Mammary epithelial cell (primary cell): ENCODE measurements at regions of chr6 and their contacts with region 1.

Region 1: GRCh38 chr6:149834513-149835481 is 29.4 kb downstream of the LRP11 start:
- DNase-seq: peak; percentile 84
- H3K4me3 ChIP-seq: no peak overlapping the region
- H3K27ac ChIP-seq: peak overlapping the region; percentile 49
- H3K4me1 ChIP-seq: peaks cover 21% of the 10 kb centered on the region
- H3K27me3 ChIP-seq: no peaks in the 10 kb centered on the region
- CTCF ChIP-seq: peak; percentile 86 to 87

Region 2: DNA sequence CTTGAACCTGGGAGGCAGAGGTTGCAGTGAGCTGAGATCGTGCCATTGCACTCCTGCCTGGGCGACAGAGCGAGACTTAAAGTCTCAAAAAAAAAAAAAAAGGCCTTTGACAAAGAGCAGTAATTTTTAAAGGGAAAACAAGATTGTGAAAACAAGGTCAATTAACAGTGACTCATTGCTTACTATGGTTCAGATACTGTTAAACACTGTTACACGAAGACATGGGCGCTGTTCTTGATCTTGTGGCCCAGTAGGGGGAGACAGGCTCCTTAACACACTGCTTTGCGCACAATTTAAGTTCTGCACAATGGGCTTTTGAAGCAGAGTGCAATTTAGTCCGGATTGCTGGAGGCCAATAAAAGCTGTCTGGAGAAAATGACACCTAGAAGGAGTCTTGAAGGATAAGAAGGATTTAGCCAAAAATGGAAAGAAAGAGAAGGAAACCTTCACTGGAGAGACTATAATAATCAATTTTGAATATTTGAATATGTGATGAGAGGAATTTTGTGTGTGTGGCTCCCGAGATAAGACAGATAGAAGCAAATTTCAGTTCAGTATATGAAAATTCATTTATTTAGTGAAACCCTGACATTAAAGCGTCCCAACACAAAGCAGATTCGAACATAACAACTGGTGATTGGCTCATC is 110.9 kb before region 1 on chr6:
- CTCF ChIA-PET with region 1: no interaction called
- dilution Hi-C with region 1: no loop called
- in situ Hi-C with region 1: no loop called
- intact Hi-C with region 1: loop called (anchors 10 kb)
- DNase-seq: peak; percentile 74
- H3K4me3 ChIP-seq: no peak overlapping the region
- H3K27ac ChIP-seq: no peak overlapping the region
- H3K4me1 ChIP-seq: no peaks in the 10 kb centered on the region
- H3K27me3 ChIP-seq: no peaks in the 10 kb centered on the region
- CTCF ChIP-seq: peak; percentile 89 to 92

Region 3: GRCh38 chr6:149806127-149806526 is 28.7 kb before region 1 on chr6:
- CTCF ChIA-PET with region 1: no interaction called
- dilution Hi-C with region 1: no loop called
- in situ Hi-C with region 1: no loop called
- intact Hi-C with region 1: no loop called
- DNase-seq: peak; percentile 10
- H3K4me3 ChIP-seq: no peak overlapping the region
- H3K27ac ChIP-seq: no peak overlapping the region
- H3K4me1 ChIP-seq: no peaks in the 10 kb centered on the region
- H3K27me3 ChIP-seq: no peaks in the 10 kb centered on the region
- CTCF ChIP-seq: no peak

Region 4: DNA sequence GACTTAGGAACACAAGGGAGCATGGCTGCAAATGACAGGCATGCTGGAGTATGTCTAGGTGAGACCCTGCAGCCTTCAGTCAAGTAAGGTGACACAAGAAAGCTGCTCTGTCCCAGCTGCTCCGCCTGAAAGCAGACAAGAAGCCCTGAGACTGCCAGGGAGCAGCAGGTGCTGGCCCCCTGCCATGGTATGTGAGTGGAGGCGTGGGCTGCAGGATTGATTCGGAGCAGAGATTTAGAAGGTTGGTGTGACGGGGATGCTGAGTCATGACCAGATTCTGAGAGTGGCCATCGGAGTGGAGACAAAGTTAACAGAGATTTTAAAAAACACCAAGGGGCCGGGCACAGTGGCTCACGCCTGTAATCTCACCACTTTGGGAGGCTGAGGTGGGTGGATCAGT is 11.5 kb after region 1 on chr6:
- CTCF ChIA-PET with region 1: no interaction called
- dilution Hi-C with region 1: no loop called
- in situ Hi-C with region 1: no loop called
- intact Hi-C with region 1: loop called (anchors 1 kb)
- DNase-seq: peak; percentile 74
- H3K4me3 ChIP-seq: no peak overlapping the region
- H3K27ac ChIP-seq: peak overlapping the region; percentile 12
- H3K4me1 ChIP-seq: peaks cover 34% of the 10 kb centered on the region
- H3K27me3 ChIP-seq: no peaks in the 10 kb centered on the region
- CTCF ChIP-seq: no peak

Region 5: DNA sequence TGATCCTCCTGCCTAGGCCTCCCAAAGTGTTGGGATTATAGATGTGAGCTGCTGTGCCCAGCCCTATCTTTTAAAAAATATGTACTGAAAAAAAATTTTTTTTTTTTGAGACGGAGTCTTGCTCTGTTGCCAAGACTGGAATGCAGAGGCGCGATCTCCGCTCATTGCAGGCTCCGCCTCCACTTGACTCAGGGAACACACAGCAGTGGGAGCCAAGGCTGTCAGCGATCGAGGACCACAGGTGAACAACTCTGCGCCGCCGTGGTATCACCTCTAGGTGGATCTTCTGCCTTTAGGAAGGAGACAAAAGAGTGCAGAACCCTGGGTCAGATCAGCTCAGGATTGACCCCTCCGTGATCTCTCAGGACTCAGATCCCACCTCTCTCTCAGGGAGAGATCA is 49.4 kb after region 1 on chr6:
- CTCF ChIA-PET with region 1: no interaction called
- dilution Hi-C with region 1: no loop called
- in situ Hi-C with region 1: no loop called
- intact Hi-C with region 1: no loop called
- DNase-seq: no peak
- H3K4me3 ChIP-seq: no peak overlapping the region
- H3K27ac ChIP-seq: no peak overlapping the region
- H3K4me1 ChIP-seq: peaks cover 46% of the 10 kb centered on the region
- H3K27me3 ChIP-seq: no peaks in the 10 kb centered on the region
- CTCF ChIP-seq: peak; percentile 20 to 37

Region 6: DNA sequence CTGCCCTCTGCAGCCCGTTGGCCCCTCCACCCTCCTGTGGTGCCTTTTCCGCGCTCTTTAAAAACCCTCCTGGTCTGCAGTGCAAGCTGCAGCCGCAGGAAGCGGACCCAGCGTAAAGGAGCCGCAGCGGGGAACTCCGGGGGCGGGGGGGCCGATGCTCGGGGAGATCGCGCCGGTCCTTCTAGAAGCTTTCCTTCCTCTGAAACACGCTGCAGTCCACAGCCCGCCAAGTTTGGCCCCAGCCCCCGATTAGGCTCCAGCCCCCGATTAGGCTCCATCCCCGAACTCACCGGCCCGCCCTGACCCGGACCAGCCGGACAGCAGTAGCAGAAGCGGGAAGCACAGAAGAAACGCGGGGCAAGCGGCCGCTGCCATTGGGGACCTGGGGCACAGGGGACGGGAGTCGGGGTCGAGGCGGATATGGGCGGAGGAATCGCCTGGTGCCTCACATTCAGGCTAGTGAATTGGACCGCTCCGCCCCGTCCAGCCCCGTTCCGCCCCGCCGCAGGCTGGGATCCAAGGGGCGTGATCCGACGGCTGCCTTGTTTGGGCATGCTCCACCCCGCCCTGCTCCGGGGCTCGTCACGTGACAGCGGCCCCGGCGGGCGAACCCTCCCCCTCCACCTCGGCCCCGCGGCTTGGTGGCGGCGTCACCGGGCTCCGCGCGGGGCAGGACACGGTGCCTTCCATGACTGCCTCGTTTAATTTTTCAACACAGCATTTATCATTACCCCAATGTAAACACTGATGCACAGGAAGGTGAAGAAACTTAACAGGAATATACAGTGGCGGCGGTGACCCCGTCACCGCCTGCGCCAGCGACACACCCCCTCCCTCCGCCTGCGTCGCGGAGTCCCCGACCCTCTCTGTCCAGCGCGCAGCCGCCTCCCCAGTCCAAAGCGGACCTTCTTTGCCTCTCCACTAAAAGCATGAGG is 170.3 kb after region 1 on chr6:
- CTCF ChIA-PET with region 1: no interaction called
- dilution Hi-C with region 1: no loop called
- in situ Hi-C with region 1: loop called in 1 of 2 experiments (anchors 25 kb)
- intact Hi-C with region 1: no loop called
- DNase-seq: peak; percentile 88
- H3K4me3 ChIP-seq: peak overlapping the region; percentile 66 to 88 (median 75)
- H3K27ac ChIP-seq: no peak overlapping the region
- H3K4me1 ChIP-seq: peaks cover 14% of the 10 kb centered on the region
- H3K27me3 ChIP-seq: no peaks in the 10 kb centered on the region
- CTCF ChIP-seq: no peak